ENCODE measurements at regions of chr9 and their contacts with region 1.

Region 1: DNA sequence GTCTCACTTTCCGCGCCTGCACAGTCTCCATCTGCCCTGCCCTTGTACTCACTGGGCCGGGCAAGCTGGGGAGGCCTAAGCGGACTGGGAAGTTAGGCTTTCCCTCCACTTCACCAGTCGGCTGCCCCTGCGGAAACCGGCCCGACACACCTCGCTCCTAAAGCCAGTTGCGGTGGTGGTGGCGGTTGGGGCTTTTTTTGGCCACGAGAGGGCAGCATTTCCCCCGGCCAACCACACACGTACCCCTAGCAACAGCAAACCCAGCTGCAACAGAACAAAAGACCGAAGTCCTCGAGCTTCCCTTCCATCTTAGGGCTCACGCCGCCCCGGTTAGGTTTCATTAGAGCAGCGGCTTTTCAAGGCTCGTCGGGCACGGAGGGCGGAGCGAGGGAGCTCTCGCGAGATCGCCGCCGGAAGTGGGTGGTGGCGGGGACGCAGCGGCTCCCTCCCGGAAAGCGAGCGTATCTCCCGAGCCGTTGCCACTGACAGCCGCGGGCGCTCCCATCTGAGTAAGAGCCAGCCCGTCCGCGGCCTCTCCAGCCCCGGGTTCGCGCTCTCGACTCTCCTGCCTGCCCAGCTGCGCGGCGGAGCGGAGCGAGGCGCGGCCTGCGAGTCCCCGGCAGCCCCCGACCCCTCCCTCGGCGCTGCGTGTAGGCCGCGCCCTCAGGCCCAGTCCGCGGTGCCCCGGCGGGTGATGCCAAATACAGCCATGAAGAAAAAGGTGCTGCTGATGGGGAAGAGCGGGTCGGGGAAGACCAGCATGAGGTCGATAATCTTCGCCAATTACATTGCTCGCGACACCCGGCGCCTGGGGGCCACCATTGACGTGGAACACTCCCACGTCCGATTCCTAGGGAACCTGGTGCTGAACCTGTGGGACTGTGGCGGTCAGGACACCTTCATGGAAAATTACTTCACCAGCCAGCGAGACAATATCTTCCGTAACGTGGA is at the start of gene RRAGA:
- DNase-seq: peak; percentile 84 to 90
- H3K4me3 ChIP-seq: peak within 1 kb of the TSS; percentile 92
- H3K27ac ChIP-seq: peak within 1 kb of the TSS; percentile 78
- H3K4me1 ChIP-seq: peaks cover 24% of the 10 kb centered on the region
- H3K27me3 ChIP-seq: no peaks in the 10 kb centered on the region
- CTCF ChIP-seq: peak; percentile 83
- total RNA-seq, gene RRAGA: 25.2 and 30.1 TPM in 2 replicates

Region 2: GRCh38 chr9:19009391-19009965 is 39.8 kb before region 1 on chr9:
- CTCF ChIA-PET with region 1: no interaction called
- POLR2A ChIA-PET with region 1: no interaction called
- intact Hi-C with region 1: no loop called
- DNase-seq: no peak
- H3K4me3 ChIP-seq: no peak overlapping the region
- H3K27ac ChIP-seq: no peak overlapping the region
- H3K4me1 ChIP-seq: no peaks in the 10 kb centered on the region
- H3K27me3 ChIP-seq: peaks cover 8% of the 10 kb centered on the region; the same call in 1 of the 2 replicates
- CTCF ChIP-seq: no peak

Region 3: DNA sequence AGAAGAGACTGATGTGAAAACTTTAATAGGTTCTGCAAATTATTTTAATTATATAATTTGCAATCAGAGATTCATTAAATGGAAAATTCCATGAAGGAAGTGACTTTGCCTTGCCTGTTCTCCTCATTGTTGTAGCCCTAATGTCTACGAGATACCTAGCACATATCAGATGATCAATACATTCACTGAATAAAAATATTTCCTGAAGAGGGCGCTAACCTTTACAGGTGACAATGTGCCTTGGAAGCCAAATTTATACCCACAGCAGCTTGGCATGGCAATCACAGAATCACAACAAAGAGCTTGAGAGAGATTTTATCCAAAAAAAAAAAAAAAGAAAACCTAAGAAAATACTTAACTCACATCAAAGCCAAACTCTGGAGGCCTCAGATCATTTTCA is 36.1 kb after region 1 on chr9:
- CTCF ChIA-PET with region 1: no interaction called
- POLR2A ChIA-PET with region 1: no interaction called
- intact Hi-C with region 1: loop called (anchors 5 kb)
- DNase-seq: no peak
- H3K4me3 ChIP-seq: no peak overlapping the region
- H3K27ac ChIP-seq: no peak overlapping the region
- H3K4me1 ChIP-seq: no peaks in the 10 kb centered on the region
- H3K27me3 ChIP-seq: no peaks in the 10 kb centered on the region
- CTCF ChIP-seq: peak; percentile 55

Region 4: DNA sequence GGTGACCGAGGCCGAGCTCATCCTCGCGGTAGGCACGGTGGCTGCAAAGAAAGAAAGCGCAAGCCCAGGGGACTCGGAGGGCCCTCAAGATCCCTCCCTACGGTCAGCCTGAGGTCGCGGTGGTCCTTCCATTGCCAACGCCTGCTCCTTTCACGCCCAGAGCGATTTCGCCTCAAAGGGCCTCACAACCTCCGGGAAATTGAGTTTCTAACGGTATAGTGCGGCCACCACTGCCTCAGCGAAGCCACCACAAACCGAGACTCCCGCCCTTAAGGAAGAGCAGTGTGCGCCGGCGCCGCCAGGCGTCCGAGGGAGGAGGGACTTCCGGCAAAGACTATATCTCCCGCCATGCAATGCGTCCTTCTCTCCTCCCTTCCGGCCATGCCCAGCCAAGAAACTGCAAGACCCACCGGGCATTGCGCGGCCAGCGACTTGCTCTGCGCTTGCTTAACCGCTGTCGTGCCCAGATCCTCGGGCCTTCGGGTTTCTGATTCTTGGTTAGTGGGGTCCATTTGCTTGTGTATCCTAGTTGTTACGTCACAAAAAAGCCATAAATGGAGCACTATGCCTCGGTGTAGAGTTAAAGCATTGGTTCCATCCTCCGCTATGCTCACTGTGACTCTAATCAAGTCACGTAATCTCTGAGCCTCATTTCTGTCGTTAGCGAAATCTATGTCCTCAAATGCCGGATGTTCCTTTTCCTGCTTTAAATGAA is 53.5 kb after region 1 on chr9 and contains the start of gene HAUS6:
- CTCF ChIA-PET with region 1: no interaction called
- POLR2A ChIA-PET with region 1: no interaction called
- intact Hi-C with region 1: loop called (anchors 1 kb)
- DNase-seq: peak; percentile 81 to 86
- H3K4me3 ChIP-seq: peak within 1 kb of the TSS; percentile 64
- H3K27ac ChIP-seq: peak within 1 kb of the TSS; percentile 77
- H3K4me1 ChIP-seq: peaks cover 10% of the 10 kb centered on the region
- H3K27me3 ChIP-seq: no peaks in the 10 kb centered on the region
- CTCF ChIP-seq: peak; percentile 45; the same call in 1 of the 2 replicates
- total RNA-seq, gene HAUS6: 13.3 and 19.1 TPM in 2 replicates

Region 5: DNA sequence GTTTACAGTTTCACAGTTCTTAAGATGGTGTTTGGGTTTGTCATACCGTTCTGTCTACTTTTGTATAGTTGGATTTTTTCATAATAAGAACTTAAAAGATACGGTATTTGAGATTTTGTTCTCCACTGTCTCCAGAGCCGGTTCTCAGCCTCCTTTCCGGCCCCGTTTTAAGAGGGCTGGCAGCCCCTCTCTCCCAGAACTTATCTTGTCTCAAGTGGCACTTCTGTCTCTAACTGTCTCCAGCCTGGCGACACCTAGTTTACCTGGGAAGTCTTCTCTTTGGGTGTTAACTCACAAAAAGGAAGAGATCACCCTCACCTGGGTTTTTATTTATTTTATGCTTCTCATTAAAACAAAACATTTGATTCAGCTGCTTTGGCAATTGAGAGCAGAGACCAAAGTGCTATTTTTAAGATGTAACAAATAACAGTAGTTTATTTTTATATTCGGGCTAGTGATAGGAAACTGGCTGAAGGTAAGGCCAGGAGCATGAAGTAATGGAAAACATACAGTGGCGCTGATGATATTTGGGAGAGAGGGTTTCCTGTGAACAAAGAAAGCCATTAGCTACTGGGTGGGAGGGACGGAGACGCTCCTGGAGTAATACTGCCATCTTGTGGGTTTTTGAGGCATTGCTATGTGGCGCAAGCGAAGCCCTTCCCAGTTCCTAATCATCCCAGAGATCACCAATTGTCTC is 407.9 kb after region 1 on chr9:
- CTCF ChIA-PET with region 1: no interaction called
- POLR2A ChIA-PET with region 1: no interaction called
- intact Hi-C with region 1: loop called (anchors 5 kb)
- DNase-seq: peak; percentile 45 to 59
- H3K4me3 ChIP-seq: no peak overlapping the region
- H3K27ac ChIP-seq: no peak overlapping the region
- H3K4me1 ChIP-seq: no peaks in the 10 kb centered on the region
- H3K27me3 ChIP-seq: no peaks in the 10 kb centered on the region
- CTCF ChIP-seq: peak; percentile 83

Measured in PC-9 (cell line).